GM10248 (cell line): ENCODE measurements at regions of chr19 and their contacts with region 1.

Region 1: DNA sequence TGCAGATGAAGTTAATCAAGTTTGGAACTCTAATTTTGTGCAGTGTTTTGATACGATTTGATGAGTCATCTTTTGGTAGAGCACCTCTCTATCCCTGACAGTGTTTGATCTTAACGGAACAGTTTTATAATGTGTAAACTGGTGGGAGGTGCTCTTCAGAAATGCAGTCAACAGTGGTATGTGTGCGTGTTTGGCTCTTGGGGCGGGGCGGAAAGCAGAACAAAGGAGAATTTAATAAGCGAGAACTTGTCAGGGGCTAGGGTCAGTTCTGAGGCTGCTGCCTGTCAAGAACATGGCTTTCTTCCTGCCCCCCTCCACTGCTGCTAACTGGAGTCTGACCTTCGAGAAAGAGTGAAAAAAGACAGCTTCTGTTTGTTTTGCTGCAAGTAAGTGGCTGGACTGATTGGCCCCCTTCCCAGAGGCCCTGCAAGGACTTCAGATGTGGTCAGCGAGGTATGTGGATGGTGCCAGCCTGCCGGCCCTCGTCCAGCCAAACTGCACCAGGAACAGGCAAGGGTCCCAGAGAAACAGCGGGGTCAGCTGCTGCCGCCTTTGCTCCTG is 40.8 kb downstream of the BBC3 start:
- DNase-seq: no peak
- CTCF ChIP-seq: no peak

Region 2: GRCh38 chr19:47019431-47020041 is 170.7 kb before region 1 on chr19 and contains the start of gene NPAS1:
- CTCF ChIA-PET with region 1: no interaction called
- POLR2A ChIA-PET with region 1: no interaction called
- DNase-seq: no peak
- CTCF ChIP-seq: no peak

Region 3: GRCh38 chr19:47152224-47153017 is 37.8 kb before region 1 on chr19:
- CTCF ChIA-PET with region 1: interaction called, 13 read pairs
- POLR2A ChIA-PET with region 1: no interaction called
- DNase-seq: no peak
- CTCF ChIP-seq: no peak

Region 4: DNA sequence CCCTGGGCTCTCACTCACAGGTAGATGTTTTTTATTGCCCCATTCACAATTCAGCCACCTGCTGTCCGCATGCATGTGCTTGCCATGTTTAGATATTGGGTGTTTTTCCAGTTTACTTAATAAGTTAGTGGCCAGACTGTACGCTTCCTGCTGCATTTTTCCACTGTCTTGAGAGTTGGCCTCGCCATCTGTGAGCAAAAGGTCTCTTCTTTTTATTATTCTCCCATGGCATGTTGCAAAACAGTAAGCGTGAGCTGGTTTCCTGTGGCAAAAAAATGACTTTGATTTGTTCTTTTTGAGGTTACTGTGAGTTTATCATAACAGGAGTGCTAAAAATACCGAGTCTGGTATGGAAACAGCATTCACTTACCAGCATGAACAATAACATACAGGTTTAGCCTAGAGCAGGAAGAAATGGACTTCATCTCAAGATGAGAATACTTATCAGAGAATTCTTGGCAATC is 13.6 kb before region 1 on chr19:
- CTCF ChIA-PET with region 1: interaction called, 15 read pairs
- POLR2A ChIA-PET with region 1: no interaction called
- DNase-seq: no peak
- CTCF ChIP-seq: no peak

Region 5: DNA sequence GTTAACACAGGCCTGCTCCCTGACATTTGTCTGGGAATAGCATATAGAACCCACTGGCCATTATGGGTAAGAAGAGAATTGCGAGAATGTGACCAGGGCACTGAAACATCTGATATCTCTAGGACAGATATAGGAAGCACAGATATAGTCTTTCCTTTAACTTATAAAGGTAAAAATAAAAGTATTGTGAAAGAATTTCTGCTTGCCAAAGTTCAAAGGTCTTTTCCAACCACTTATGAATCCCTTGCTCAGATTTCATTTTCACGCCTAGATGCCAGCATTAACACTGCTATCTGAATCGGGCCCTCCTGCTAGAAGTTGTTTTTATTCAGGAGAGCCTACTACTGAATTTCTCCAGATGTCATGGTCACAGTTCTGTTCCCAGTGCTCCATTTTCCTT is 13.0 kb after region 1 on chr19:
- CTCF ChIA-PET with region 1: interaction called, 14 read pairs
- POLR2A ChIA-PET with region 1: no interaction called
- DNase-seq: no peak
- CTCF ChIP-seq: no peak

Region 6: GRCh38 chr19:47267350-47267759 is 77.1 kb after region 1 on chr19:
- CTCF ChIA-PET with region 1: no interaction called
- POLR2A ChIA-PET with region 1: no interaction called
- DNase-seq: no peak
- CTCF ChIP-seq: no peak